ENCODE measurements at regions of chrX and their contacts with region 1.

Region 1: DNA sequence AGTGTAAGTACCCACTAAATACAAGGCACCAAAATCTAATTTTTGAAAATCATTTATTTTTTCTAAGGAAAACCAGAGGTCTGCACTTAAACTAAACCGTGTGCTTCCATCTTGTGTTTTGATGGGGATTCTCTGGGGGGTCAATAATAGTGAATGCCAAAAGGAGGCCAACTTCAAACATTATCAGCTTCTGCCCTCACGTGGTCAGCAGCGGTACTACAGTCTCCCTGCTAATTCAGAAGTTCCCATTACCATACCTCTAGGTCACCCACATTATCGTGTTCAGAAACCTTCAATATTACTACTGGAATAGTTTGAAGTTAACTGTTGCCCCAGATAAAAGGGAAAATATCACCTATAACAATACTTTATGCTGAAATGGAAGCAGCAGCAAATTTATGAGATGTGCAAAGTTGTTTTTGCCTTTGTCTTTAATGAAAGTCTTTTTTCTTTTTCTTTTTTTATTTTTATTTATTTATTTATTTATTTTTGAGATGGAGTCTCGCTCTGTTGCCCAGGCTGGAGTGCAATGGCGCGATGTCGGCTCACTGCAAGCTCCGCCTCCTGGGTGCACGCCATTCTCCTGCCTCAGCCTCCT is 17.3 kb downstream of the CTPS2 start:
- DNase-seq: peak; percentile 63
- ATAC-seq: peak; percentile 73
- H3K4me3 ChIP-seq: no peak overlapping the region
- H3K4me3 Mint-ChIP-seq: no peak overlapping the region
- H3K27ac ChIP-seq: no peak overlapping the region
- H3K27ac Mint-ChIP-seq: no peak overlapping the region
- H3K4me1 ChIP-seq: no peaks in the 10 kb centered on the region
- H3K4me1 Mint-ChIP-seq: no peaks in the 10 kb centered on the region
- H3K27me3 ChIP-seq: no peaks in the 10 kb centered on the region
- H3K27me3 Mint-ChIP-seq: no peaks in the 10 kb centered on the region
- CTCF ChIP-seq: peak; percentile 77

Region 2: DNA sequence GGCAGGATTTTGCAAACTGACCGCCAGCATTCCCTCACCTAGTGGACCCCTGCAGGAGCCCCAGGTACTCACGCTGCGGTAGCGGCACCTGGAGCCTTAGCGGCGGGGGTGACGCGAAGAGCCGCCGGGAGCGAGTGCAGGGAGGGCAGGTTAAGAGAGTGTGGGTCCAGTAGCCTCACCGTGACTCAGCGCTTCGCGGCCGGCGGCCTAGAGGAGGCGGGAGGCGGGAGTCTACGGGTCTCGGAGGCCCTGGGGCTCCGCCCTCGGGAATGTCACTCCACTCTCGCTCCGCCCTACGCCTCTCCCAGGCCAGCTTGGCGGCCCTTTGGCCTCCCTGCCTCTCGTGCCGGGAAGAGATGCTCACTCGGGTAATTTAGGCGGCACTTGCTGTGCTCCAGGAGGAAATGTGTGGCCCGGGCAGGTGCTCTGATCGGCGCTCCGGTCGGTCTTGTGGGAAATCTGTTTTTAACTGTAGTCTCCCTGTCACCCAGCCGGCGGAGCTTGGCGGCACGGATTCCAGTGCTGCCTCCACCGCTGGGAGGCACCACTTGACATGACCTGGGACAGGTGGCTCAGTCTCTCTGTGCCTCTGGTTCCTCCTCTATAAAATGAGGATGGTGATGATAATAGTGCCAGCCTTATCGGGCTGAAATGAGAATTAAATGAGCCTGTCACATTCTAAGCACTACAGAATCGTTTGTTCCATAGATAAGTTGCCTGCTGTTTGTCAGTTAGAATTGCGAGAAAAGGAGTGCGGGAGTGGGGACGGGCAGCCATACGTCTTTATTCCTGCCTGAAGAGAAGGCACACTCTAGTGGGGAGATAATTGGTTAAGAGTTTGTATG is 1201.8 kb before region 1 on chrX and contains the start of gene PIR:
- CTCF ChIA-PET with region 1: no interaction called
- POLR2A ChIA-PET with region 1: no interaction called
- intact Hi-C with region 1: loop called (anchors 10 kb)
- DNase-seq: peak; percentile 26
- ATAC-seq: peak; percentile 73
- H3K4me3 ChIP-seq: peak within 1 kb of the TSS in 4 of 5 experiments; percentile 20 to 46 (median 32)
- H3K4me3 Mint-ChIP-seq: peak within 1 kb of the TSS; percentile 86
- H3K27ac ChIP-seq: no peak within 1 kb of the TSS
- H3K27ac Mint-ChIP-seq: no peak within 1 kb of the TSS
- H3K4me1 ChIP-seq: peaks cover 7 to 8% of the 10 kb centered on the region in 2 donors
- H3K4me1 Mint-ChIP-seq: peaks cover 8% of the 10 kb centered on the region
- H3K27me3 ChIP-seq: peaks cover 0 to 10% (median 6%) of the 10 kb centered on the region in 4 experiments
- H3K27me3 Mint-ChIP-seq: peaks cover 15% of the 10 kb centered on the region
- CTCF ChIP-seq: no peak
- total RNA-seq, gene PIR: 0.22 and 0.24 TPM in 2 replicates

Region 3: GRCh38 chrX:16683007-16683664 is 12.0 kb before region 1 on chrX:
- CTCF ChIA-PET with region 1: interaction called, 10 read pairs
- POLR2A ChIA-PET with region 1: no interaction called
- intact Hi-C with region 1: no loop called
- DNase-seq: no peak
- ATAC-seq: no peak
- H3K4me3 ChIP-seq: no peak overlapping the region
- H3K4me3 Mint-ChIP-seq: no peak overlapping the region
- H3K27ac ChIP-seq: no peak overlapping the region
- H3K27ac Mint-ChIP-seq: no peak overlapping the region
- H3K4me1 ChIP-seq: no peaks in the 10 kb centered on the region
- H3K4me1 Mint-ChIP-seq: no peaks in the 10 kb centered on the region
- H3K27me3 ChIP-seq: no peaks in the 10 kb centered on the region
- H3K27me3 Mint-ChIP-seq: no peaks in the 10 kb centered on the region
- CTCF ChIP-seq: no peak

Measured in B cell (primary cell).